ENCODE measurements at regions of chr14 and their contacts with region 1.

Region 1: DNA sequence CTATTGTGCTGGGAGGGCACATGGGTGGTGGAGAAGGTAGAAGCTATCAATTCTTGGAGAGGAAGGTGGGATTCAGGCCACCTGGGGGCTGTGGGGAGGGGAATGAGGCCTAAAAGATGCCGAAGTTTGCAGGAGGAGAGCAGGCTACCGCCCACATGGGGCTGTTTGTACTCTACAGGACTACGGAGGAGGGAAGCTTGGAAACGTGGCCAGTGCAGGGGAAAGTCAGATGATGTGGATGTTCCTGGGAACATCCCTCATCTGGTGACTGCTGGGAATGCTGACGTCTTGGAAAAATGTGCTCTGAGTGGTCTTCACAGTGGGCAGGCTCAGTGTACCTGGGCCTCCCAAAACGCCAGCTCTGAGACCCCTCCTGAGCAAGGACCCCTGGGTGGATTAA is 78.5 kb downstream of the TNFAIP2 start:
- DNase-seq: no peak
- CTCF ChIP-seq: no peak

Region 2: GRCh38 chr14:103185051-103185992 is 16.5 kb before region 1 on chr14:
- CTCF ChIA-PET with region 1: interaction called, 10 read pairs
- POLR2A ChIA-PET with region 1: no interaction called
- DNase-seq: peak; percentile 42
- CTCF ChIP-seq: peak; percentile 30